Naive thymus-derived CD4-positive, alpha-beta T cell (primary cell): ENCODE measurements at regions of chr2 and their contacts with region 1.

Region 1: GRCh38 chr2:241315093-241315878 is at the start of gene HDLBP:
- DNase-seq: peak; percentile 100
- ATAC-seq: peak; percentile 87
- H3K4me3 ChIP-seq: peak within 1 kb of the TSS; percentile 98
- H3K4me3 Mint-ChIP-seq: peak within 1 kb of the TSS; percentile 93 to 100 (median 98)
- H3K27ac ChIP-seq: peak within 1 kb of the TSS; percentile 95
- H3K27ac Mint-ChIP-seq: peak within 1 kb of the TSS; percentile 96 to 100 (median 99)
- H3K4me1 ChIP-seq: peaks cover 44 to 48% of the 10 kb centered on the region in 2 donors
- H3K4me1 Mint-ChIP-seq: peaks cover 62 to 84% (median 75%) of the 10 kb centered on the region in 7 donors
- H3K27me3 ChIP-seq: no peaks in the 10 kb centered on the region
- H3K27me3 Mint-ChIP-seq: no peaks in the 10 kb centered on the region
- total RNA-seq, gene HDLBP: 127 to 231 (median 169) TPM

Region 2: DNA sequence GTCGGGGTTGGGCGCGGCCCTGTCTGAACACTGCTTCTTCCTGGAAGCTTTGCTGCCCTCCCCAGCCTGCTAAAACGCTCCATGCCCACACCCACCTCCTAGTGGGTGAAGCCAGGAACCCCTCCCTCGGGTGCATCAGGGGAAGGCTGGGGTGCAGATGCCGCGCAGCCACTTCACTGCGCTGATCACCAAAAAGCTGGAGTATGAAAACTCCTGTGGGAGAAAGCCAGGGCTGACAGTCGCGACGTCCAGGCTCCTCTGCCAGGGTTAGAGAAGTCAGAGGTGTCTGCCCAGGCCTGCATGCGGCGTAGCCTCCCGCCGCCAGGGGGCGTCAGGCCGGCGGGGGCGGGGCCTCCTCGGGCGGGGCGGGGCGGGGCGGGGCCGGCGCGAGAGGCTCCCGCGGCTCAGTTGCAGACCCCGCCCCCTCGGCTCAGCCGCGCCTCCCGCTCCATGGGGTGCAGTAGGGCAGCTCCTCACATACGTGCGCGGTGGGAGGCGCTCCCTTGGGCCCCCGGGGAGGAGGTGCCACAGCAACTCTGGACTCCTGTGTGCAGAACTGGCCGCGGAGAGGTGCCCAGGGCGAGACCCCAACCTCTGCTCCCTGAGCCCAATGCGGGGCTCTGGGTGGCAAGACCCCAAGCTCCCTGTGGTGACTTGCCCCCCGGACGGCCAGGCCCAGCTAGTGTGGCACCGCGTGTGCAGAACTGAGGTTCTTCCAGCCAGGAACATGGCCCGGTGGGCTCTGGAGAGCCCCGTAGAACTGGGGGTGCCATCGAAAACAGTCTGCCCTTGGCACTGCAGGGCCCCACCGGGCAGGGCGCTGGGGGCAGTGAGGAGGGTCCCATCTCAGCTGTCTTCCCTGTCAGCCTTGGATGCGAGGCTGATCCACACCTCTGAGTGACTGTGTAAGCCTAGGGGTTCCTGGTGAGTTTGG is 748.8 kb before region 1 on chr2:
- CTCF ChIA-PET with region 1: no interaction called
- POLR2A ChIA-PET with region 1: interaction called, 4 read pairs
- intact Hi-C with region 1: loop called (anchors 1 kb)
- DNase-seq: peak; percentile 86 to 96 (median 92)
- ATAC-seq: peak; percentile 79
- H3K4me3 ChIP-seq: peak overlapping the region; percentile 82
- H3K4me3 Mint-ChIP-seq: peak overlapping the region; percentile 88 to 98 (median 94)
- H3K27ac ChIP-seq: peak overlapping the region; percentile 85
- H3K27ac Mint-ChIP-seq: peak overlapping the region; percentile 90 to 99 (median 98)
- H3K4me1 ChIP-seq: peaks cover 80% of the 10 kb centered on the region in 2 donors
- H3K4me1 Mint-ChIP-seq: peaks cover 53 to 82% (median 75%) of the 10 kb centered on the region in 7 donors
- H3K27me3 ChIP-seq: no peaks in the 10 kb centered on the region
- H3K27me3 Mint-ChIP-seq: no peaks in the 10 kb centered on the region

Region 3: GRCh38 chr2:240983361-240983995 is 331.8 kb before region 1 on chr2:
- CTCF ChIA-PET with region 1: no interaction called
- POLR2A ChIA-PET with region 1: no interaction called
- intact Hi-C with region 1: no loop called
- DNase-seq: peak in 7 of 9 donors; percentile 27 to 55 (median 42)
- ATAC-seq: peak; percentile 78
- H3K4me3 ChIP-seq: no peak overlapping the region
- H3K4me3 Mint-ChIP-seq: peak overlapping the region in 1 of 10 donors; percentile 30
- H3K27ac ChIP-seq: no peak overlapping the region
- H3K27ac Mint-ChIP-seq: no peak overlapping the region
- H3K4me1 ChIP-seq: no peaks in the 10 kb centered on the region
- H3K4me1 Mint-ChIP-seq: peaks cover 0 to 5% (median 2%) of the 10 kb centered on the region in 7 donors
- H3K27me3 ChIP-seq: no peaks in the 10 kb centered on the region
- H3K27me3 Mint-ChIP-seq: peaks cover 0 to 14% (median 0%) of the 10 kb centered on the region in 5 donors

Region 4: DNA sequence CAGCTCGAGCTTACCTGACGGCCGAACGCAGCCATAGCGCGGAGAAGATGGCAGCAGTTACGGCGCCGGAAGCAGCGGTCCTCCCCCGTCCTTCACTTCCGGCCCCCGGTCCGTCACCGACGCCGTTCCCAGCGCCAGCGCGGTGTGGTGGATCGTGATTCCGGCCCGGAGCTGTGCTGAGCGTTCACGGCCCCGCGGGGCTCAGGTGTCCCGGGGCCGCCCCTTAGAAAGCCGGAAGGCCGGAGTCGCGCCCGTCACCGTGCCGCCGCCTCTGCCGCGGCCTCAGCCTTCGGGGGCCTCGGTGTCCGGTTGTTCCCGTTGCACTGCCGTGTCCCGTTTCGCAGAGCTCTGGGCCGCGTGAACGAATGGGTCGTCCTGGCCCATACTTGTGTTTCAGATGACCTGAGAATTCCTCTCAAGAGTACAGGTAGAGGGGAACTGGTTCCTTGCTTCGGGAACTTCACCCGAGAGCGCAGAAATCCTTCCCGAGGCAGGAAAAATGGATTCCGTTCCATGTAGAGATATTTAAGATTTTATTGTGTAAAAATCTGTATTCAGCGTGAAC is 213.0 kb before region 1 on chr2 and contains the start of gene MTERF4:
- CTCF ChIA-PET with region 1: no interaction called
- POLR2A ChIA-PET with region 1: interaction called, 7 read pairs
- intact Hi-C with region 1: loop called (anchors 1 to 2 kb)
- DNase-seq: peak; percentile 80 to 91 (median 86)
- ATAC-seq: peak; percentile 98
- H3K4me3 ChIP-seq: peak within 1 kb of the TSS; percentile 89
- H3K4me3 Mint-ChIP-seq: peak within 1 kb of the TSS; percentile 86 to 99 (median 96)
- H3K27ac ChIP-seq: peak within 1 kb of the TSS; percentile 92
- H3K27ac Mint-ChIP-seq: peak within 1 kb of the TSS; percentile 96 to 99 (median 99)
- H3K4me1 ChIP-seq: peaks cover 29 to 55% of the 10 kb centered on the region in 2 donors
- H3K4me1 Mint-ChIP-seq: peaks cover 27 to 84% (median 64%) of the 10 kb centered on the region in 7 donors
- H3K27me3 ChIP-seq: no peaks in the 10 kb centered on the region
- H3K27me3 Mint-ChIP-seq: no peaks in the 10 kb centered on the region
- total RNA-seq, gene MTERF4: 45.3 to 214 (median 91.8) TPM

Region 5: GRCh38 chr2:241300000-241300399 is 15.3 kb before region 1 on chr2:
- CTCF ChIA-PET with region 1: interaction called, 3 read pairs
- POLR2A ChIA-PET with region 1: interaction called, 87 read pairs
- intact Hi-C with region 1: loop called in 1 of 2 experiments (anchors 1 kb)
- DNase-seq: peak in 8 of 9 donors; percentile 22 to 72 (median 57)
- ATAC-seq: peak; percentile 91
- H3K4me3 ChIP-seq: no peak overlapping the region
- H3K4me3 Mint-ChIP-seq: peak overlapping the region; percentile 6 to 91 (median 63)
- H3K27ac ChIP-seq: no peak overlapping the region
- H3K27ac Mint-ChIP-seq: peak overlapping the region; percentile 27 to 84 (median 71)
- H3K4me1 ChIP-seq: peaks cover 17 to 21% of the 10 kb centered on the region in 2 donors
- H3K4me1 Mint-ChIP-seq: peaks cover 38 to 77% (median 71%) of the 10 kb centered on the region in 7 donors
- H3K27me3 ChIP-seq: no peaks in the 10 kb centered on the region
- H3K27me3 Mint-ChIP-seq: no peaks in the 10 kb centered on the region

Region 6: GRCh38 chr2:241355983-241356870 is 40.9 kb after region 1 on chr2 and contains the start of gene FARP2:
- CTCF ChIA-PET with region 1: interaction called, 3 read pairs
- POLR2A ChIA-PET with region 1: interaction called, 7 read pairs
- intact Hi-C with region 1: loop called (anchors 1 kb)
- DNase-seq: peak; percentile 91 to 99 (median 97)
- ATAC-seq: peak; percentile 93
- H3K4me3 ChIP-seq: peak within 1 kb of the TSS; percentile 54
- H3K4me3 Mint-ChIP-seq: peak within 1 kb of the TSS; percentile 75 to 92 (median 85)
- H3K27ac ChIP-seq: peak within 1 kb of the TSS; percentile 72
- H3K27ac Mint-ChIP-seq: peak within 1 kb of the TSS in 8 of 9 donors; percentile 80 to 95 (median 90)
- H3K4me1 ChIP-seq: peaks cover 6 to 7% of the 10 kb centered on the region in 2 donors
- H3K4me1 Mint-ChIP-seq: peaks cover 5 to 34% (median 19%) of the 10 kb centered on the region in 7 donors
- H3K27me3 ChIP-seq: no peaks in the 10 kb centered on the region
- H3K27me3 Mint-ChIP-seq: no peaks in the 10 kb centered on the region
- total RNA-seq, gene FARP2: 12.4 to 31.0 (median 22.1) TPM

Region 7: DNA sequence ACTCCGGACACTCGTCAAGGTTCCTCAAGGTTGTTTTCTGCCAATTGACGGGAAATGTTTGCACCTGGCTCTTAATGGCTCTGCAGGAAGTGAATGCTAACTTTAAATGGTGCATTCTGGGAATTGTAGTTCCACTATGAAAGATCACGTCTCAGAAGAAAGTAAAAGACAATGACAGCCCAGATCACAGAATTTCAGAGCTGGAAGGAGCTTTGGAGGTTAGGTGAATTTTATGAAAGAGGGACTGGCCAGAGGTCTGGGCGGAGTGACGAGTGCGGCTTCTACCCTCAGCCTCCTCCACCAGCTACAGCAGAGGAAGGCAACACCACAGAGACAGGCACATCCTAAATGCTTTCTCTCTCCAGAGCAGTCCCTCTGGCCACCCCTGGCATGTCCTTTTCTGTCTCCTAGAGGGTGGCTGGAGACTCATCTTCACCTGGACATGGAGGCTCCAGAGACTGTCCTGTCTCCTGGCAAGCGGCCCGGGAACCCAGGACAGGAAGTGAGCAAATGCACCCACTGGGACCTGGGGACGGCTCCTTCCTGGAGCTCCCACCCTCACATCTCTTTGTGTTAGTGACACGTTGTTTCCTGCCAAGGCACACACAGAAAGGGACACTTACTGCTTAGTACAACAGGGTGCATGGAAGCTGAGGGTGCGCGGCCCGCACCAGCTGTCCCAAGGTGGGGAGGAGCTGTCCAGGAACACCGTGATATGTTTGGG is 302.3 kb after region 1 on chr2:
- CTCF ChIA-PET with region 1: interaction called, 3 read pairs
- POLR2A ChIA-PET with region 1: no interaction called
- intact Hi-C with region 1: loop called in 1 of 2 experiments (anchors 2 kb)
- DNase-seq: peak in 8 of 9 donors; percentile 41 to 71 (median 60)
- ATAC-seq: peak; percentile 77
- H3K4me3 ChIP-seq: peak overlapping the region; percentile 68
- H3K4me3 Mint-ChIP-seq: peak overlapping the region; percentile 79 to 96 (median 91)
- H3K27ac ChIP-seq: peak overlapping the region; percentile 75
- H3K27ac Mint-ChIP-seq: peak overlapping the region; percentile 85 to 98 (median 94)
- H3K4me1 ChIP-seq: peaks cover 13 to 18% of the 10 kb centered on the region in 2 donors
- H3K4me1 Mint-ChIP-seq: peaks cover 23 to 49% (median 43%) of the 10 kb centered on the region in 7 donors
- H3K27me3 ChIP-seq: no peaks in the 10 kb centered on the region
- H3K27me3 Mint-ChIP-seq: no peaks in the 10 kb centered on the region

Region 8: DNA sequence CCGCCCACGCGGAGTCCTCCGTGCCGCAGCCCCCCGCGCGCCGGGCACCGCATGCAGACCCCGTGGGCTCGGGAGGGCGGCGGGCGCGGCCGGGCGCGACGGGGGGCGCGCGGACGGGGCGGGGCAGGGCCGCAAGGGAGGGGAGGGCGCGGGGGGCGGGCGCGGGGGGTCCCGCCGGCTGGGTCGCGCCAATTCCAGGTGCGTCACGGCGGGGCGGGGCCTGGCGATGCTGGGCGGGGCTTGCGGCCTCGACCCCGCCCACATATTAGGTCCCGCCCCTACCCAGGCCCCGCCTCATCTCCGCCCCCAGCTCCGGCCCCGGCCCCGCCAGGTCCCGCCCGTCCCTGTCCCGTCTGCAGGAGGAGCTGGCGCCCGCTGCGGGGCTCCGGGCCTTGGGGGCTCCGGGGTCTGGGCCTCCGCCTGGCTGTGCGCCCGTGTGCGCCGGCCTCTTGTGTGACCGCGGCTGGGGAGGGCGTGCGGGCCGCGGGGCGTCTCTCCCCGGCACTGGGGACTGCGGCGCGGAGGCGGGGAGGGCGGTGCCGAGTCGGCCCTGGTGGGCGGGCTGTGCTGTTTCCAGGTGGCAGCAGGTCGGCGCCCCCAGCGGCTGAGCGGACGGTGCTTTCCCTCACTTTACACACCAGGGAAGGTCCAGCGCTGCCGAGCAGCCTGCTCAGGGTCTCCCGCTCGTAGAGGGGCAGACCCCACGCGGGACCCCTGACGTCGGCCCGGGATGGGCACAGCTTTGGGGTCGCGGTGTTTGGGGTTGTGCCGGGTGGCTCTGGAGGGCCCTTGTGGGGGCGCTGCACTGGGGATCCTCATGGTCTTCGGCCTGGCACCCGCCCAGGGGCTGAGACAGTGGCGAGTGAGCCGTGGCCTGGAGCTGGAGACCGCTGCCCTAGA is 387.1 kb after region 1 on chr2:
- CTCF ChIA-PET with region 1: no interaction called
- POLR2A ChIA-PET with region 1: interaction called, 3 read pairs
- intact Hi-C with region 1: loop called (anchors 1 kb)
- DNase-seq: peak; percentile 83 to 92 (median 89)
- ATAC-seq: peak; percentile 89
- H3K4me3 ChIP-seq: peak overlapping the region; percentile 74
- H3K4me3 Mint-ChIP-seq: peak overlapping the region; percentile 74 to 89 (median 84)
- H3K27ac ChIP-seq: peak overlapping the region; percentile 75
- H3K27ac Mint-ChIP-seq: peak overlapping the region; percentile 75 to 87 (median 82)
- H3K4me1 ChIP-seq: peaks cover 7 to 12% of the 10 kb centered on the region in 2 donors
- H3K4me1 Mint-ChIP-seq: peaks cover 11 to 38% (median 26%) of the 10 kb centered on the region in 7 donors
- H3K27me3 ChIP-seq: no peaks in the 10 kb centered on the region
- H3K27me3 Mint-ChIP-seq: no peaks in the 10 kb centered on the region